GM12878 (cell line): ENCODE measurements at regions of chr10 and their contacts with region 1.

Region 1: DNA sequence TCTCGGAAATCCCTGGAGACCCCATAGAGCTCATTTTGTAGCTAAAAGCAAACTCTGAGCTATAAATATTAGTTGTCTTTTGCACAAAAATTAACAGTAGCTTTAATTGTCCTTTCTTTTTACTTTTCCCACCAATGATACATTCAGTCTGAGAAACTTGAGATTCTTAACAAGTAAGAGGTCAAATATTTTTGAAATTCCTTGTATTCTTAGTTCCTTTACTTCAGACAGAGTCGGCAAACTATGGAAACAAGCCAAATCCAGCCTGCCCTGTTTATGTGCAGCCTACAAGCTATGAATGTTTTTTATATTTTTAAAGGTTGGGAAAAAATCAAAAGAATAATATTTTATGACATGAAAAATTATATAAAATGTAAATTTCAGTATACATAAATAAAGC is 146.6 kb downstream of the CTNNA3 start:
- DNase-seq: no peak
- ATAC-seq: no peak
- H3K4me3 ChIP-seq: no peak overlapping the region
- H3K27ac ChIP-seq: no peak overlapping the region
- H3K4me1 ChIP-seq: no peaks in the 10 kb centered on the region
- H3K27me3 ChIP-seq: no peaks in the 10 kb centered on the region
- CTCF ChIP-seq: no peak
- EP300 ChIP-seq: no peak
- POLR2A ChIP-seq: no peak
- RAD21 ChIP-seq: no peak

Region 2: DNA sequence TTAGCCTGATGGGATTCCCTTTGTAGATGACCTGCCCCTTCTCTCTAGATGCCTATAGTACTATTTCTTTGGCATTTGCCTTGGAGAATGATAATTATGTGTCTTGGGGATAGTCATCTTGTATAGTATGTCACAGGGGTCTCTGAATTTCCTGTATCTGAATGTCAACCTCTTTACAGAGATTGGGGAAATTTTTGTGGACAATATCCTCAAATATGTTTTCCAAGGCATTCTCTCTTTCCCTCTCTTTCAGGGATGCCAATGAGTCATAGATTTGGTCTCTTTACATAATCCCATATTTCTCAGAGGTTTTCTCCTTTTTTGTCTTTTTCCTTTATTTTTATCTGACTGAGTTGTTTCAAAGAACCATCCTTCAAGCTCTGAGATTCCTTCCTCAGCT is 47.3 kb after region 1 on chr10:
- CTCF ChIA-PET with region 1: no interaction called
- POLR2A ChIA-PET with region 1: no interaction called
- RAD21 ChIA-PET with region 1: no interaction called
- SMC1A ChIA-PET with region 1: interaction called, 3 read pairs
- in situ Hi-C with region 1: no loop called
- intact Hi-C with region 1: loop called (anchors 10 kb)
- DNase-seq: no peak
- ATAC-seq: no peak
- H3K4me3 ChIP-seq: no peak overlapping the region
- H3K27ac ChIP-seq: no peak overlapping the region
- H3K4me1 ChIP-seq: no peaks in the 10 kb centered on the region
- H3K27me3 ChIP-seq: no peaks in the 10 kb centered on the region
- CTCF ChIP-seq: no peak
- EP300 ChIP-seq: no peak
- POLR2A ChIP-seq: no peak
- RAD21 ChIP-seq: no peak